ENCODE measurements at regions of chr17 and their contacts with region 1.

Region 1: DNA sequence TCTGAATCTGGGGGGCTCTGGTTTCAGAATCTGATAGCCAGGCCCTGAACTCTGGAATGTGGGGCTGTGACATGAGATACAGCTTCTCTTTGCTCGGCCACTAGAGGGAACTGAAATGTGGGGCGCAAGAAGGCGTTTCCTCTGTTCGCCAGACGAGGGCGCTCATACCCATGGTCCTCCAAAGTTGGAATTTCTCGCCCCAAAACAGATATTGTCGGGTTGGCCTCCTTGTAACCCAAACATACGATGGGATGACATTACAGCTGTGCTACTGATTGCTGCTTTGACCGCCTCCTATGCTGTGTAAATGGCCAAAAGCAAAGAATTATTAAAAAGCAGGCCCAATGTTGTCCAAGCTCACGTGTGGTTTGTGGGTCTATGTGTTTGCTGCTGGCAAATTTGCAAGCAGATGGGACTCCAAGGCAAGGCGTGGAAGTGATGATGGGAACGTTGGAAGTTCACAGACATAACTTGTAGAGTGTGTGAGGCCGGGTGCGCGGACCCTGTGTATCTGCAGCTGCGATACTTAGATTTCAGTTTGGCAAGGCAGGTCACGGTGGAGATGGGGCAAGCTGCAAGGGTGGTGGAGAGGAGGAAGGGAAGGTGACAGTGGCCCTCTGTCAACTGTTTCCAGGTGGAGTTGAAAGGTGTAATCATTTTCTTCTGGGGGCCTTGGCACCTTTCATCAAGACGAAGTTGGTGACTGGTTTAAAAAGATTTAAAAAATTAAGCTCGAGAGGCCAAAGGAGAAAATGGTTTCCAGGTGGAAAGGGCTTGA is 13.0 kb upstream of the MSI2 start:
- DNase-seq: peak; percentile 80
- H3K4me3 Mint-ChIP-seq: no peak overlapping the region
- H3K27ac Mint-ChIP-seq: no peak overlapping the region
- H3K4me1 Mint-ChIP-seq: peaks cover 5% of the 10 kb centered on the region
- H3K27me3 Mint-ChIP-seq: peaks cover 18% of the 10 kb centered on the region

Region 2: DNA sequence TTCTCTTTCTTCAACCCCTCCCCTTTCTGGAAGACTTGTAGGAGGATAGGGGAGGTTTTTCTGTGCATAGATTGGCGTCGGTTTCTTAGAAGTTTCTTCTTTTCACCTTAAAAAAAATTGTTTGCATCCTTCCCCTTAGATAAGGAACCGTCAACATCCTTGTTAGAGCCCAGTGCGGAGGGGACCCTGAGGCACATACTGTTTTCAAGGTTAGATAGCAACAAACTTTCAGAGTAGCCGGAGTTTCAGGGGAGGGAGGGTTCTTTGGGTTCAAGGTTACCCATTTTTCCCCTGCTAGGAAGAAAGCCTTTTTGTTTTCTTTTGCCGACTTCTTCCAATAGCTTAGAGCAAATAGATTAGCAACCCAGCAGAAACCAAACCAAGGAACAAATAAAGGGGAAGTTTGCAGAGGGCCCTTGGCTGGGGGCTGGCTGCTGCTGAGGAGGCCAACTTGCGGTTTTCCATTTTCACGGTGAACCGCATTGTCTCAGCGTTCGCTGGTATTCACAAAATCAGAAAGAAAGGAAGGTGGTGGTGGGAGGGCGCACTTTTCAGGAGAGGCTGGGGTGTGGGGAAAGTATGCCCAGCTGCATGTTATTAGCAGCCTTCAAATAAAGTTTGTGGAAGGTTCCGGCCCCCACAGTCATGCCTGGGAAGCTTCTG is 41.8 kb after region 1 on chr17:
- CTCF ChIA-PET with region 1: interaction called, 11 read pairs
- POLR2A ChIA-PET with region 1: no interaction called
- DNase-seq: peak; percentile 73
- H3K4me3 Mint-ChIP-seq: peak overlapping the region; percentile 64
- H3K27ac Mint-ChIP-seq: peak overlapping the region; percentile 88
- H3K4me1 Mint-ChIP-seq: peaks cover 79% of the 10 kb centered on the region
- H3K27me3 Mint-ChIP-seq: no peaks in the 10 kb centered on the region

Region 3: DNA sequence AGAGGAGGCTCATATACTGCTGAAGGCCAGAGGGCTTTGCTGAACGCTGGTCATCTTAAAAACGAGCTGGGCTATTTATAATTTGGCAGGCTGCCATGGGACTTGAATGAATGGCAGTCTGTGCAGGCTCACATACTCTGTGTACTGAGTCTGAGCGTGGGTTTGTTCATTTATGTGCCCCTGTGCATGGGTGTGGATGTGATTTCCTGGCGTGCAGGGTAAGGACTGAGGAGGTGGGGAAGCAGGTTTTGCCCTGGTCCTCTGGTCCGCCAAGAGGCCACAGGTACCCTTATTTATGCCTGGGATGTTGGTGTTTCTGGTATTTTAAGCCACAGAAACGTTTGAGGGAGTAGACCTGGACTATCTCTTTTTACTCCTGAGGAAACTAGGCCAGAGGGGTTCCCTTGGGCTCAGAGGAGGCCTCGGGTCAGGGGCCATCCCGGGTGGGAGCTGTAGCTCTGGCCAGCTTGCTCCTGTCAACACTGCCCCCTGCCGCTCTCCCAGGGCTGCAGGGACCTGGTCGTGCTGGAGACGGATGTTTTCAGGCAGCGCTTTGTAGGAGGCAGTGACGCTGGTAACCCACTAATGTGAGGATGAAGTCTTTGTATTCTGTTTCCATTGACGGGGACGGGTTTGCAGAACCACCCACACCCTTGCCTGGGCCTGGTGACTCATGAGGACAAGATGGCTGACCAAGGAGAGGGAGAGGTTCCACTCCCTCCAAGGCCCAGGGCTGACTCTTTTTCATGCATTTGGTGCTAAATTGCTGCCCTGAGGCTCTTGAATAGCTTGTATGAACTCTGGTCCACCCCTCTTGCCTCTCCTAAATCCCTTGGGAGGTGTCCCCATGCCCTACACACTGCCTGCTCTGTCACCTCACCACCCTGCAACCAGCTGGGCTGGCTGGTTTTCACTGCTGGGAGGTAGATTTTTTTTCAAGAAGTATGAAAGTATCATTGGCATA is 197.4 kb after region 1 on chr17:
- CTCF ChIA-PET with region 1: interaction called, 33 read pairs
- POLR2A ChIA-PET with region 1: no interaction called
- DNase-seq: peak; percentile 74
- H3K4me3 Mint-ChIP-seq: no peak overlapping the region
- H3K27ac Mint-ChIP-seq: peak overlapping the region; percentile 85
- H3K4me1 Mint-ChIP-seq: peaks cover 58% of the 10 kb centered on the region
- H3K27me3 Mint-ChIP-seq: no peaks in the 10 kb centered on the region

Region 4: DNA sequence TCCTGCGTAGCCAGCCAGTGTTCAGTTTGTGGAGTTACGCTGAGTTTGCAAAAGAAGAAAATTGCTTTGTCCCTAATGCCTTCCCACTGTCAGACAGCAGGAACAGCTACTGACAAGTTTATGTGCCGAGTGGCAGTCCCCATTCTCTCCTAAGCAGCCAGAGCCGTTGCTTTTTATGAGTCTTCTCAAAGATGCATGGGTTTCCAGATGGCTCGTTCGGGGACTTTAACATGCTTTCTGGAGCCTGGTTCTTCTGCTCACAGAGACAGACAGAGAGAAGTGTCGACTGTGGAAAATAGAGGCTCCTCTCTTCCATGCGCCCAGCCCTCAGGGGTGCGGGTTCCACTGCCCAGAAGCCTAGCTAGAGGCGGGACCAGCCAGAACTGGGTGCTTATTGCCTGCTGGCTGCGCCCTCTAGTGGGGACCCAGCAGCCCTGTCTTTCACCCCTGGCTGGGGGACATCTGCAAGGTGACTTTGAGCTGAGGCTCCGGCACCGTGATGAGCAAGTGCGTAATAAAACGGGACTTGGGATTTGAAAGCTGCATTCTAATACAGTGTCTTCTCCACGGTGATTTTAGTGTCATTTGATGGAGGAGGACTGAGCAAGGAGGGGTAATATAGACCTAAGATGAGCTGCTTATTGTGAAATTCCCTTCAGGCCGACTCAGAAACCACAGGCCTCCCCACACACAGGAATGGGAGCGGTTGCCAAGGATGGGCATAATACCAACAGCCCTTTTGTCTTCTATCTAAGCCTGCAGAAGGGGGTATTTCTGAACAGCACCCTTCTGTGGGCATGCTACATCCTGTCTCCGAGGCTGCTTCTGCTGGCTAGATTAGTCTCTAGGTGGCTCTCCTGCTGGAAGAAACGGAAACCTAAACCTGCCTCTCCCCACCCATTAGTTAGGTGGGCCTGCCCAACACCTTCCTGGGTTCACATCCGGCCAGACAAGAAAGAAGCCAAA is 428.6 kb after region 1 on chr17:
- CTCF ChIA-PET with region 1: interaction called, 48 read pairs
- POLR2A ChIA-PET with region 1: interaction called, 3 read pairs
- DNase-seq: peak; percentile 77
- H3K4me3 Mint-ChIP-seq: no peak overlapping the region
- H3K27ac Mint-ChIP-seq: peak overlapping the region; percentile 82
- H3K4me1 Mint-ChIP-seq: peaks cover 31% of the 10 kb centered on the region
- H3K27me3 Mint-ChIP-seq: no peaks in the 10 kb centered on the region

Region 5: GRCh38 chr17:57783106-57783742 is 539.9 kb after region 1 on chr17:
- CTCF ChIA-PET with region 1: interaction called, 16 read pairs
- POLR2A ChIA-PET with region 1: no interaction called
- DNase-seq: peak; percentile 81
- H3K4me3 Mint-ChIP-seq: no peak overlapping the region
- H3K27ac Mint-ChIP-seq: no peak overlapping the region
- H3K4me1 Mint-ChIP-seq: no peaks in the 10 kb centered on the region
- H3K27me3 Mint-ChIP-seq: peaks cover 21% of the 10 kb centered on the region